CD4-positive, alpha-beta memory T cell (primary cell): ENCODE measurements at regions of chr10 and their contacts with region 1.

Region 1: DNA sequence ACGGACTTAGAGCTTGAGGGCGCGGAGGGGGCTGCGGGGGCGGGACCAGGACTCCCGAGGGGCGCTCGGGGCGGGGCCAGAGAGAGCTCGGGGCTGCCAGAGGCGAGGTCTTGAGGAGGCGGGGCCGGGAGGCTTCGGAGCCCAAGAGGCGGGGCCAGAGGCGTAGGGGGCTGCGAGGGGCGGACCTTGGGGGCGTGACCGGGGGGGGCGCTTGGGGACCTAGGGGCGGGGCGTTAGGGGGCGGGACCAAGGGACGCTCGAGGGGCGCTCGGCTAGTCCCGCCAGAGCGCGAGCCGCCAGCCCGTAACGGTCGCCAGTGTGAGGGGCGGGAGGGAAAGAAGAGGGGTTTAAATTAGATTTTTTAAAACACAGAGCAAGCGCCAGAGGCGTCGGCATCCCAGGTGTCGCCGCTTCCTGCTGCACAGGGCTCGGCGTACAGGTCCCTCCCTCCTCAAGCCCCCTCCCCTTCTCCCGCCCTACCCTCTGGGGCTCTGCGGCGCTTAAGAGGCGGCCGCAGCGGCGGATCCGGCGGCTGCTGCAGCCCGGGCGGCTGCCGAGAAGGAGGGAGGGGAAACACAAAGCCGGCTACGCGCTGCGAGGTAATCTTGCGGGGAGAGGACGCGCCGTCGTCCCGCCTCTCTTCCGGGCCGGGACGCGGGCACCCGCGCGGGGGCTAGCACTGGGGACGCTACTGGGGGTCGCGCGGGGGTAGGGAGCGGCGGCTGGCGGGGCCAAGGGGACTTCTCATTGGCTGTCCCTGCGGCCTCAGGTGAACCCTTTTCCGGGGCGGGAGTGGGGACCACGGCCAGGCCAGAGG is at the start of gene ADD3:
- DNase-seq: peak; percentile 89 to 93 (median 91)
- H3K4me3 ChIP-seq: peak within 1 kb of the TSS; percentile 61 to 88
- H3K4me3 Mint-ChIP-seq: peak within 1 kb of the TSS in 3 of 8 donors; percentile 98 to 100 (median 100)
- H3K27ac ChIP-seq: peak within 1 kb of the TSS; percentile 81
- H3K27ac Mint-ChIP-seq: peak within 1 kb of the TSS in 6 of 7 donors; percentile 88 to 99 (median 96)
- H3K4me1 ChIP-seq: peaks cover 42% of the 10 kb centered on the region
- H3K4me1 Mint-ChIP-seq: peaks cover 19 to 48% (median 39%) of the 10 kb centered on the region in 4 donors
- H3K27me3 ChIP-seq: no peaks in the 10 kb centered on the region
- H3K27me3 Mint-ChIP-seq: no peaks in the 10 kb centered on the region
- total RNA-seq, gene ADD3: 365 to 374 TPM

Region 2: DNA sequence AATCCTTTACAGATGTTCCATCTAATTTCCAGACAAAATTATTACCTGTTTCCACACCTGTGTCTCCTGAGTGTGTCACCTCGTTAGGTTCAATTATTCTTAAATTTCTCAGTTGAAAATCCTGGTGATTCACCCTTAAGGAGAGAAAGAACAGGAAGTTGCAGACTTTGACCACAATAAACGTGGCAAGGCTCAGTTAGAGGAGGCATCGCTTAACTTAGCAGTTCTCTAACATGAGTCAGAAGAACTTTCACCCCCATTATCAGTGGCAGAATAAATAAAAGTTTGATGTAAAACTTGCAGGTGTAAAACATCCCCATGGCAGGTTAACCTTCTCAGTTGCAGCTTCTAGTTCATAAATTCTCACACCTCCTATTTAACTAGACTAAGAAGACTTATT is 92.9 kb before region 1 on chr10:
- CTCF ChIA-PET with region 1: interaction called, 6 read pairs
- POLR2A ChIA-PET with region 1: interaction called, 24 read pairs
- intact Hi-C with region 1: no loop called
- DNase-seq: peak; percentile 56 to 84 (median 60)
- H3K4me3 ChIP-seq: peak overlapping the region in 1 of 2 donors; percentile 15
- H3K4me3 Mint-ChIP-seq: peak overlapping the region in 7 of 8 donors; percentile 29 to 80 (median 72)
- H3K27ac ChIP-seq: peak overlapping the region; percentile 29
- H3K27ac Mint-ChIP-seq: peak overlapping the region; percentile 32 to 94 (median 77)
- H3K4me1 ChIP-seq: peaks cover 81% of the 10 kb centered on the region
- H3K4me1 Mint-ChIP-seq: peaks cover 58 to 95% (median 75%) of the 10 kb centered on the region in 4 donors
- H3K27me3 ChIP-seq: no peaks in the 10 kb centered on the region
- H3K27me3 Mint-ChIP-seq: no peaks in the 10 kb centered on the region

Region 3: GRCh38 chr10:109956454-109957091 is 51.3 kb before region 1 on chr10:
- CTCF ChIA-PET with region 1: interaction called, 3 read pairs
- POLR2A ChIA-PET with region 1: no interaction called
- intact Hi-C with region 1: loop called (anchors 5 kb)
- DNase-seq: peak in 4 of 5 donors; percentile 11 to 32 (median 14)
- H3K4me3 ChIP-seq: no peak overlapping the region
- H3K4me3 Mint-ChIP-seq: no peak overlapping the region
- H3K27ac ChIP-seq: no peak overlapping the region
- H3K27ac Mint-ChIP-seq: peak overlapping the region in 1 of 7 donors; percentile 24
- H3K4me1 ChIP-seq: no peaks in the 10 kb centered on the region
- H3K4me1 Mint-ChIP-seq: peaks cover 0 to 4% (median under 1%) of the 10 kb centered on the region in 4 donors
- H3K27me3 ChIP-seq: no peaks in the 10 kb centered on the region
- H3K27me3 Mint-ChIP-seq: no peaks in the 10 kb centered on the region

Region 4: DNA sequence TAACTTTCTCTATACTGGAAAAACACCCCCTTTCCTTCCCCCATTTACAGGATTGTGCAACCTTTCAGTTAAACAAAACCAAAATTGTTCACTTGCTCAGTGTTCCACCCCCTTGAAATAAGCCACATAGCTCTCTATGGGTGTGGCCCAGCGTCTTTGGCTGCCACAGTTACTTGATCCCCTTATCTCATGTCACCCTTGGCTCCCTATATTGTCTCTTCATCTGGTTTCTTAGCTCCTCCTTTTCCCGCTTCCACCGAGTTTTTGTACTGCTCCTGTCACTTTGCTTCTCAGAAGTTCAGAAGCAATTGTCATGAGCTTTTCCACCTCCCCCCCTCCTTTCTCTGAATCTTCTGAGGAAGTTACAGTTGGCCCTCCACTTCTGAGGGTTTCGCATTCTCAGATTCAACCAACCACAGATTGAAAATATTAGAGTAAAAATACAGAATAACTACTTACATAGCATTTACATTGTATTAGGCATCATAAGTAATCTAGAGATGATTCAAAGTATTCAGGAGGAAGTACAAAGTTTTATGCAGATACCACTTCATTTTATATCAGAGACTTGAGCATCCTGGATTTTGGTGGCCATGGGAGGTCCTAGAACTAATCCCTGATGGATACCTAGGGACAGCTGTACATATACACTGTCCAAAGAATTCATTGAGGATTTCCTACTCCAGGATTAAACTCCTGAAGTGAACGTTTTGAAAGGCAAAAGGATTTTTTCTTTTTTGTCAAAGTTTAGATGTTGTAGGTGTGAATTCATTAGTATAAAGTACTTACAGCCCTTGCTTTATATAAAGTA is 60.3 kb after region 1 on chr10:
- CTCF ChIA-PET with region 1: interaction called, 4 read pairs
- POLR2A ChIA-PET with region 1: interaction called, 116 read pairs
- intact Hi-C with region 1: loop called (anchors 2 kb)
- DNase-seq: peak; percentile 43 to 72 (median 46)
- H3K4me3 ChIP-seq: no peak overlapping the region
- H3K4me3 Mint-ChIP-seq: peak overlapping the region; percentile 67 to 87 (median 80)
- H3K27ac ChIP-seq: peak overlapping the region; percentile 55
- H3K27ac Mint-ChIP-seq: peak overlapping the region; percentile 80 to 97 (median 92)
- H3K4me1 ChIP-seq: peaks cover 96% of the 10 kb centered on the region
- H3K4me1 Mint-ChIP-seq: peaks cover 60 to 96% (median 78%) of the 10 kb centered on the region in 4 donors
- H3K27me3 ChIP-seq: no peaks in the 10 kb centered on the region
- H3K27me3 Mint-ChIP-seq: no peaks in the 10 kb centered on the region

Region 5: GRCh38 chr10:110210674-110211464 is 203.0 kb after region 1 on chr10:
- CTCF ChIA-PET with region 1: no interaction called
- POLR2A ChIA-PET with region 1: interaction called, 36 read pairs
- intact Hi-C with region 1: loop called (anchors 5 kb)
- DNase-seq: peak; percentile 87 to 93 (median 88)
- H3K4me3 ChIP-seq: peak overlapping the region; percentile 42 to 78
- H3K4me3 Mint-ChIP-seq: peak overlapping the region; percentile 91 to 99 (median 94)
- H3K27ac ChIP-seq: peak overlapping the region; percentile 92
- H3K27ac Mint-ChIP-seq: peak overlapping the region; percentile 94 to 99 (median 97)
- H3K4me1 ChIP-seq: peaks cover 59% of the 10 kb centered on the region
- H3K4me1 Mint-ChIP-seq: peaks cover 43 to 86% (median 52%) of the 10 kb centered on the region in 4 donors
- H3K27me3 ChIP-seq: no peaks in the 10 kb centered on the region
- H3K27me3 Mint-ChIP-seq: no peaks in the 10 kb centered on the region

Region 6: DNA sequence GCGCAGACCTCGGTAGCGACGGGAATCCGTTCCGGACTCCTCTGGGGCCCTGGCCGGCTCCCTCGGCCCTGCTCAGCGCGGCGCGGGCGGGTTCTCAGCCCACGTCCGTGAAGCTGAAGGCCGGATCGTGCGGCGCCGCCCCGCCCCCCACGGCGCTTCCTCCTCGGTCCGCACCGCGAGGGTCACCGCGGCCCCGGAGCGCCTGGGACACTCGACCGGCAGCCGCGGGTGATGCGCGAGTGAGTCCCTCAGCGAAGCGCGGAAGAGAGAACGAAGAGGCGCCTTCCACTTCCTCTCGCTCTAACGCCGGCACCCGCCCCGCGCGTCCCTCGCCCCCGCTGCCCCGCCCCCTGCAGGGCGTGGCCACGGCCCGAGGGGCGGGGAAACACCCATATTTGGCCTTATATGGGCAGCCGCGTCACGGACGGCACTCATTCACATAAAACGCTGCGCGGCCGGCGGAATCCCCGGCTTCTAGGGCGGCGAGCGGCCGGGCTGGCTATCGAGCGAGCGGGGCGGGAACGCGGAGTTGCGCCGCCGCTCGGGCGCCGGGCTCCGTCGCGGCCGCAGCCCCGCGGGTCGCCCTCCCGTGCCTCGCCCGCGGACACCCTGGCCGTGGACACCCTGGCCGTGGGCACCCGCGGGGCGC is 489.7 kb after region 1 on chr10 and contains the start of gene DUSP5:
- CTCF ChIA-PET with region 1: no interaction called
- POLR2A ChIA-PET with region 1: interaction called, 3 read pairs
- intact Hi-C with region 1: loop called (anchors 5 kb)
- DNase-seq: peak; percentile 93 to 98 (median 96)
- H3K4me3 ChIP-seq: peak within 1 kb of the TSS; percentile 76 to 83
- H3K4me3 Mint-ChIP-seq: peak within 1 kb of the TSS; percentile 93 to 98 (median 96)
- H3K27ac ChIP-seq: peak within 1 kb of the TSS; percentile 79
- H3K27ac Mint-ChIP-seq: peak within 1 kb of the TSS; percentile 91 to 98 (median 96)
- H3K4me1 ChIP-seq: peaks cover 52% of the 10 kb centered on the region
- H3K4me1 Mint-ChIP-seq: peaks cover 45 to 68% (median 55%) of the 10 kb centered on the region in 4 donors
- H3K27me3 ChIP-seq: no peaks in the 10 kb centered on the region
- H3K27me3 Mint-ChIP-seq: no peaks in the 10 kb centered on the region
- total RNA-seq, gene DUSP5: 3.5 to 3.8 TPM